HepG2 (cell line): ENCODE measurements at regions of chr18 and their contacts with region 1.

Region 1: GRCh38 chr18:3062798-3063680 is 50.1 kb upstream of the LPIN2 start:
- DNase-seq: peak; percentile 72
- ATAC-seq: peak; percentile 81
- H3K4me3 ChIP-seq: peak overlapping the region; percentile 6 to 55 (median 18); a peak in 4 of 6 replicates
- H3K27ac ChIP-seq: peak overlapping the region; percentile 92
- H3K4me1 ChIP-seq: peaks cover 60% of the 10 kb centered on the region
- H3K27me3 ChIP-seq: no peaks in the 10 kb centered on the region
- CTCF ChIP-seq: peak; percentile 90
- EP300 ChIP-seq: peak in 1 of 2 experiments; percentile 25; a peak in 1 of 4 replicates
- POLR2A ChIP-seq: no peak
- RAD21 ChIP-seq: peak; percentile 80

Region 2: GRCh38 chr18:2571200-2572143 is 491.6 kb before region 1 on chr18 and contains the starts of genes METTL4 and NDC80:
- CTCF ChIA-PET with region 1: no interaction called
- POLR2A ChIA-PET with region 1: no interaction called
- in situ Hi-C with region 1: no loop called
- intact Hi-C with region 1: no loop called
- DNase-seq: peak; percentile 85
- ATAC-seq: peak; percentile 91
- H3K4me3 ChIP-seq: peak within 1 kb of the TSS; percentile 82 to 89 (median 83)
- H3K27ac ChIP-seq: peak within 1 kb of the TSS; percentile 99
- H3K4me1 ChIP-seq: peaks cover 23% of the 10 kb centered on the region
- H3K27me3 ChIP-seq: no peaks in the 10 kb centered on the region; a peak in 1 of 5 replicates
- CTCF ChIP-seq: peak; percentile 38; the same call in 1 of the 2 replicates
- EP300 ChIP-seq: no peak
- POLR2A ChIP-seq: peak; percentile 65 to 71; a peak in 3 of 4 replicates
- RAD21 ChIP-seq: no peak
- total RNA-seq, gene METTL4: 6.8 and 8.4 TPM in 2 replicates
- total RNA-seq, gene NDC80: 33.0 and 47.0 TPM in 2 replicates

Region 3: GRCh38 chr18:2889761-2890192 is 173.3 kb before region 1 on chr18:
- CTCF ChIA-PET with region 1: no interaction called
- POLR2A ChIA-PET with region 1: no interaction called
- in situ Hi-C with region 1: no loop called
- intact Hi-C with region 1: no loop called
- DNase-seq: peak; percentile 33
- ATAC-seq: no peak
- H3K4me3 ChIP-seq: no peak overlapping the region
- H3K27ac ChIP-seq: no peak overlapping the region
- H3K4me1 ChIP-seq: peaks cover 24% of the 10 kb centered on the region
- H3K27me3 ChIP-seq: peaks cover 2 to 19% of the 10 kb centered on the region in 2 experiments; a peak in 4 of 5 replicates
- CTCF ChIP-seq: no peak
- EP300 ChIP-seq: no peak
- POLR2A ChIP-seq: no peak
- RAD21 ChIP-seq: no peak

Region 4: DNA sequence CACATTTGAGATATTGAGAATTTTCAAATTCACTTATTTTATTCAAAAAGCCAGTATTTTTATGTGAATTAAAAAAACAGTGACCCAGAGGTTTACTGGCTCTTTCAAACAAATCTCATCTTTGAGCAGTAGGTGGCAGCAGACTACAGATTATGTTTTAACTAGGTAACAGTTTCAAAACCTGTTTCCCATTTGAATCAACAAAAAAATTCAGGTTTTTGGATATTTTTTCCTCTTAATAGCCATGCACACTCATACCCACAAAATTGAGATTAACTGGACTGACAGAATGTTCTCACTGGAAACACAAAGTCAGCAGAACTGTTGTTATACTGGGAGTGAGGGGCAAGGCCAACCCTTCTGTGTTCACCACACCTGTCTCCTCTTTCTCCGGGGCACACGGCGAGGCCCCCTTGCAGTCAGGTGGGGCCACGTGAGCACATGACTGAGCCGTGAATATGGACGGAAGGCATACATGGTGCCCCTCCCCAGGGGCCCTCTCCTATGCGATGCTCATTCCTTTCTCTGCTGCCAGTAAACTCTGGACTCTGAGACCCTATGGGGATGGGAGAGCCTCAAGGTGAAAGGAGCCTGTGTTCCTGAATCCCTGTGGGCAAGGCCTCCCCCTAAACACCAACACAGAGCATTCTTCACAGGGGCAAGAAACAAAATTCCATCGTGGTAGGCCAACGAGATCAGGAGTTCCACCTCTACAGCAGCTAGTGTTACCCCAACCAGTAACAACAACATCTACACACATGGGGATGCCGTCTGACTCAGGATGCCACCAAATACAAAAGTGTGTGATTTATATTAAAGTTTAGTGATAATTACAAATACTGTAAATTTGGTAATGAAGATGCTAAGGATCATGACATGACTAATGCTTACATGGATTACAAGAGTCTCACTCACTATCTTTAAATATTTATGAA is 130.5 kb before region 1 on chr18:
- CTCF ChIA-PET with region 1: interaction called, 8 read pairs
- POLR2A ChIA-PET with region 1: no interaction called
- in situ Hi-C with region 1: loop called (anchors 10 kb)
- intact Hi-C with region 1: loop called (anchors 2 kb)
- DNase-seq: peak; percentile 62
- ATAC-seq: peak; percentile 77
- H3K4me3 ChIP-seq: no peak overlapping the region
- H3K27ac ChIP-seq: peak overlapping the region; percentile 24
- H3K4me1 ChIP-seq: peaks cover 17% of the 10 kb centered on the region
- H3K27me3 ChIP-seq: no peaks in the 10 kb centered on the region
- CTCF ChIP-seq: peak; percentile 69
- EP300 ChIP-seq: no peak
- POLR2A ChIP-seq: peak in 1 of 2 experiments; percentile 14; a peak in 1 of 4 replicates
- RAD21 ChIP-seq: peak; percentile 45; the same call in 1 of the 2 replicates

Region 5: DNA sequence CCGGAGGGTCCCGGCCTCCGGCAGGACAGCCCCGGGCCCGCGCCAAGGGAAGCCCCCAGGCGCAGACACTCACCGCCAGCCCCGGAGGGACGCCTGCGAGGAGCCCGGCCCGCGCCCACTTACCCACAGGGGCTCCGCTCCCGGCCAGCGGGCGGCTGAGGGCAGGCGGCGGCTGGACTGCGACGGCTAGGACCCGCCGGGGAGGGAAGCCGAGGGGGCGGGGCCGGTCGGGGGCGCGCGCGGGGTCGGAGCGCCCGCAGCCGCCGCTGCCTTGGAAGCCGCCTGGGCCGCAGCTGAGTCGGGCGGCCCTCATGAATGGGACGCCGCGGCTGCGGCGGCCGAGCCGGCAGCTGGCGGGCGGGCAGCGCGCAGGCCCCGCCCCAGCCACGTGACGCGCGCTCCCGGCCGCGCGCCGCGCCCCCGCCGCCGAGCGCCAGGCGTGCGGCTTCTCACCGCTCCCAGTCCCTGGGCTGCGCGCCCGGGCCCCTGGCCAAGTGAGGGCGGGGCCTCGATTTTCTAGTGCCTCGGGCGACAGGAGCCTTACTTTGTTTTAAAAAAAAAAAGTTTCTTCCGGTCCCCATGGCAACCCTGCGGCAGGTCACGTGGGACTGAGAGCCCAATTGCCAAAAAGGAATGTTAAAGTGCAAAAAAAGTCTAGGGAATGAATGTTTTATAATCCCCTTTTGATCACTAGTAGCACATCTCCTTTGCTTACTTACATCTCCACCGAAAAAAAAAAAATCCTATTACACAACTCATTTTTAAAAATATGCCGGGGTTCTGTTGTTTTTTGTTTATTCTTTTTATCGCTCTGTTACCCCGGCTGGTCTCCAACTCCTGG is 49.9 kb before region 1 on chr18 and contains the start of gene LPIN2:
- CTCF ChIA-PET with region 1: no interaction called
- POLR2A ChIA-PET with region 1: interaction called, 15 read pairs
- in situ Hi-C with region 1: loop called (anchors 5 kb)
- intact Hi-C with region 1: loop called (anchors 1 kb)
- DNase-seq: peak; percentile 95
- ATAC-seq: peak; percentile 83
- H3K4me3 ChIP-seq: peak within 1 kb of the TSS; percentile 80 to 85 (median 84)
- H3K27ac ChIP-seq: peak within 1 kb of the TSS; percentile 94
- H3K4me1 ChIP-seq: peaks cover 76% of the 10 kb centered on the region
- H3K27me3 ChIP-seq: no peaks in the 10 kb centered on the region; a peak in 1 of 5 replicates
- CTCF ChIP-seq: no peak
- EP300 ChIP-seq: peak in 1 of 2 experiments; percentile 20; a peak in 1 of 4 replicates
- POLR2A ChIP-seq: peak; percentile 55 to 66
- RAD21 ChIP-seq: peak; percentile 72
- total RNA-seq, gene LPIN2: 46.0 and 59.5 TPM in 2 replicates

Region 6: GRCh38 chr18:3037423-3037915 is 25.6 kb before region 1 on chr18:
- CTCF ChIA-PET with region 1: no interaction called
- POLR2A ChIA-PET with region 1: interaction called, 7 read pairs
- in situ Hi-C with region 1: no loop called
- intact Hi-C with region 1: loop called (anchors 1 kb)
- DNase-seq: peak; percentile 98
- ATAC-seq: peak; percentile 100
- H3K4me3 ChIP-seq: no peak overlapping the region; a peak in 1 of 6 replicates
- H3K27ac ChIP-seq: peak overlapping the region; percentile 73
- H3K4me1 ChIP-seq: peaks cover 57% of the 10 kb centered on the region
- H3K27me3 ChIP-seq: no peaks in the 10 kb centered on the region; a peak in 1 of 5 replicates
- CTCF ChIP-seq: no peak
- EP300 ChIP-seq: peak; percentile 66 to 96; a peak in 3 of 4 replicates
- POLR2A ChIP-seq: peak in 1 of 2 experiments; percentile 44; a peak in 1 of 4 replicates
- RAD21 ChIP-seq: no peak

Region 7: DNA sequence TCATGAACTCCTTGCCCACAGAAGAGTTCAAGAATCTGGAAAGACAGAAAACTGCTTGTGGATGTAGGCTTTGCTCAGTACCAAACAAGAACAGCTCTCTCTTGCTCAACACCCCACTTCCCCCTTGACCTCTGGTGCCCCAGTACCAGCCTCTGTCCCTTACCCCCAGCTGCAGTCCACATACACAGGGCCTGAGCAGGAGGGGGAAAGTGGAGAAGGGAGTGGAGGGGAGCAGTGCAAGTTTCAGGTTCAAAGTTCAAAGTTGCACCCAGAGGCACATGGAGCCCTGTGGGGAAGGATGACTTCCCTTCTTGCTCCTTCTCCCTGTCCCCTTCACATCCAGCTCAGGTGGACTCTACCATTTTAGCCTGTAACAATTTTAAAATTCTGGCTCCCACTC is 11.0 kb after region 1 on chr18:
- CTCF ChIA-PET with region 1: no interaction called
- POLR2A ChIA-PET with region 1: interaction called, 10 read pairs
- in situ Hi-C with region 1: no loop called
- intact Hi-C with region 1: no loop called
- DNase-seq: peak; percentile 46
- ATAC-seq: peak; percentile 86
- H3K4me3 ChIP-seq: no peak overlapping the region
- H3K27ac ChIP-seq: peak overlapping the region; percentile 33
- H3K4me1 ChIP-seq: peaks cover 49% of the 10 kb centered on the region
- H3K27me3 ChIP-seq: no peaks in the 10 kb centered on the region
- CTCF ChIP-seq: no peak
- EP300 ChIP-seq: peak in 1 of 2 experiments; percentile 61; a peak in 2 of 4 replicates
- POLR2A ChIP-seq: no peak
- RAD21 ChIP-seq: no peak

Region 8: GRCh38 chr18:3447895-3448837 is 385.1 kb after region 1 on chr18:
- CTCF ChIA-PET with region 1: no interaction called
- POLR2A ChIA-PET with region 1: no interaction called
- in situ Hi-C with region 1: loop called (anchors 25 kb)
- intact Hi-C with region 1: no loop called
- DNase-seq: peak; percentile 93
- ATAC-seq: peak; percentile 85
- H3K4me3 ChIP-seq: peak overlapping the region; percentile 68 to 93 (median 93)
- H3K27ac ChIP-seq: peak overlapping the region; percentile 88
- H3K4me1 ChIP-seq: peaks cover 19% of the 10 kb centered on the region
- H3K27me3 ChIP-seq: no peaks in the 10 kb centered on the region; a peak in 1 of 5 replicates
- CTCF ChIP-seq: peak; percentile 36
- EP300 ChIP-seq: peak in 1 of 2 experiments; percentile 44; a peak in 2 of 4 replicates
- POLR2A ChIP-seq: peak; percentile 84 to 90
- RAD21 ChIP-seq: peak; percentile 14; the same call in 1 of the 2 replicates